ENCODE measurements at regions of chr16 and their contacts with region 1.

Region 1: DNA sequence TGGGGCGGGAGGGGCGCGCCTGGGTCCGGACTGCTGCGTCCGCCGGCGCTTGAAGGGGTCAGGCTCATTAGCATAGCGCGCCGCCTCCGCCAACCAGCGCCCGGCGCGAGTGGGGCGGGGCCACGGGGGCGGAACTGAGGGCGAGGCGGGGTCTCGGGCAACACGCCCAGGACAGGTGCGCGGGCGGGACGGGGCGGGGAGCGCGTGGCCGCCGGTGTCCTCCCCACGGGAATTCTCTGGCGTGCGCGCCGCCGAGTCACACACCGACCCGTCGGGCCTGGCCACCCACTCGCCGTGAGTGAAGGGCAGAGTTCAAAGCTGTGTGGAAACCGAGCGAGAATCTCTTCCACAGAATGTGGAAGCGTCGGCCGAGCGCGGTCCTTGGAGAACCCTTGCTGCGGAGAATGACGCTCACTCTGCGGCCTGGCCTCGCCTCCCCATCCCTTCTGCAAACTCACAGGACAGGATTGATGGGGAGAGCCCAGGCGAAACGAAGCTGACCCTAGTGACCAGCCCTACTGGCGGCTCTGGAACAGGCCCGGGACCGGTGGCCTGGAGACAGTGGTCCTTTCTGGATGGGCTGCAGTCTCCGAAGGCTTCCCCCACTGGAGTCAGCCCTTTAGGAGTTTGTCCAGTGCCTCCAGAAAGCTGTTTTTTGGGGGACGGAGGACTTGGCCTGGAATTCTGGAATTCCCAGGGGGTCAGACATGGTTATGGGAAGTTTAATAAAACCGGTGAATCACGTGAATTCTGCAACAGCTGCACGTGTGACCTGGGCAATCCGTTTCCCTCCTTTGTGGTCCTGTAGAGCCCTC is at the start of gene SNAI3:
- DNase-seq: peak; percentile 24
- ATAC-seq: peak; percentile 90
- H3K4me3 ChIP-seq: peak within 1 kb of the TSS; percentile 43
- H3K27ac ChIP-seq: no peak within 1 kb of the TSS
- H3K4me1 ChIP-seq: peaks cover 7% of the 10 kb centered on the region; the same call in 1 of the 2 replicates
- H3K27me3 ChIP-seq: peaks cover 40% of the 10 kb centered on the region
- CTCF ChIP-seq: no peak
- POLR2A ChIP-seq: no peak
- RAD21 ChIP-seq: no peak
- total RNA-seq, gene SNAI3: not detected in 2 replicates

Region 2: GRCh38 chr16:88662843-88663606 is 23.6 kb before region 1 on chr16 and contains the start of gene MVD:
- CTCF ChIA-PET with region 1: no interaction called
- POLR2A ChIA-PET with region 1: no interaction called
- dilution Hi-C with region 1: no loop called
- in situ Hi-C with region 1: no loop called
- intact Hi-C with region 1: loop called (anchors 1 kb)
- DNase-seq: peak; percentile 97
- ATAC-seq: peak; percentile 98
- H3K4me3 ChIP-seq: peak within 1 kb of the TSS; percentile 91
- H3K27ac ChIP-seq: peak within 1 kb of the TSS; percentile 75
- H3K4me1 ChIP-seq: no peaks in the 10 kb centered on the region
- H3K27me3 ChIP-seq: no peaks in the 10 kb centered on the region
- CTCF ChIP-seq: 0 out of 2 replicates have a peak, but pooled peaks have one; percentile 9
- POLR2A ChIP-seq: peak; percentile 92
- RAD21 ChIP-seq: no peak
- total RNA-seq, gene MVD: 17.2 and 18.3 TPM in 2 replicates

Region 3: DNA sequence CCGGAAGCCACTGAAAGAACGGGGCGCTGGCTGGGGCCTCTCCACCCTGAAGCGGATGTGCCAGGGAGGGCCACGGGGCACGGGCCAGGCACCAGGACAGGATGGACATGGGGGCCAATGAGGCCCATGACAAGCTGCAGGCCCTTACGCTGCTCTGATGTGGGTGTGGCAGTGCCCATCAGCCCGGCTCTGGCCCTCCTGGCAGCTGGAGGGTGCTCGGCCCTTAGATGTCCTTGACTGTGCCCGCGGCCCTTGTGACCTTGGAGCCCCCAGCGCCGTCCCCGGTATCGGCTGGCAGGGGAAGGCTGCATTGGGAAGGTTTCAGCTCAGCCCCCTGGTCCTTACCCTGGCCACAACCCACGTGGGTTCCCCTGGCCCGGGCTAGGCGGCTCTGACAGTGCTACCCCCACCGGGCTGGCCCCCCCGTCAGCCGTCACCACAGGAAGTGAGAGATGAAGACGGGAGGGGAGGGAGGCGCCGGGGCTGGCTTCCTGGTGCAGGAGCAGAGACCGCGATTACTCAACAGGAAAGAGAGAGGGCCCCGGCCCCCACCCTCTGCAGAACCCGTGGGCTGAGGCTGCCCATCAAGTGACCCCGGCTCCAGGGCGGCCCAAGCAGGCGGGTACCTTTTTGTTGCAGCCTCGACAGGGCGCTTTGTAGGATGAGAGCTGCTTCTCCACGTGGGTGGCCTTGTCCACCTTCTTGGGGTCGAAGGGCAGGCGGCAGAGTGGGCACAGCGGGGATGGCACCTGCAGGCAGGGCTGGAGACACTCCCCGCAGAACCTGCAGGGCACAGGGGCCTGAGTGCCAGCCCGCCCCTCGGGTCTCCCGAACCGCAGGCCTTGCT is 14.2 kb after region 1 on chr16:
- CTCF ChIA-PET with region 1: no interaction called
- POLR2A ChIA-PET with region 1: no interaction called
- dilution Hi-C with region 1: no loop called
- in situ Hi-C with region 1: no loop called
- intact Hi-C with region 1: loop called (anchors 1 kb)
- DNase-seq: peak; percentile 90
- ATAC-seq: peak; percentile 90
- H3K4me3 ChIP-seq: no peak overlapping the region
- H3K27ac ChIP-seq: peak overlapping the region; percentile 74
- H3K4me1 ChIP-seq: peaks cover 14% of the 10 kb centered on the region
- H3K27me3 ChIP-seq: no peaks in the 10 kb centered on the region
- CTCF ChIP-seq: no peak
- POLR2A ChIP-seq: no peak
- RAD21 ChIP-seq: no peak

Measured in IMR-90 (cell line).